Spleen (tissue), 13 donors: ENCODE measurements at regions of chr15 and their contacts with region 1.

Region 1: GRCh38 chr15:85730001-85730820 is 64.5 kb downstream of the KLHL25 start:
- DNase-seq: no peak
- H3K4me3 ChIP-seq: no peak overlapping the region
- H3K27ac ChIP-seq: peak overlapping the region in 2 of 8 donors; percentile 14 to 55
- H3K4me1 ChIP-seq: peaks cover 0 to 27% (median 6%) of the 10 kb centered on the region in 6 donors
- H3K27me3 ChIP-seq: no peaks in the 10 kb centered on the region
- CTCF ChIP-seq: peak; percentile 61 to 86 (median 79)
- POLR2A ChIP-seq: no peak

Region 2: GRCh38 chr15:85794603-85795336 is 64.6 kb after region 1 on chr15 and contains the start of gene KLHL25:
- intact Hi-C with region 1: loop called (anchors 10 kb)
- DNase-seq: peak; percentile 97
- H3K4me3 ChIP-seq: peak within 1 kb of the TSS; percentile 64 to 95 (median 88)
- H3K27ac ChIP-seq: peak within 1 kb of the TSS; percentile 22 to 89 (median 82)
- H3K4me1 ChIP-seq: peaks cover 0 to 36% (median 28%) of the 10 kb centered on the region in 6 donors
- H3K27me3 ChIP-seq: peaks cover 0 to 15% (median 0%) of the 10 kb centered on the region in 7 donors
- CTCF ChIP-seq: peak in 2 of 11 experiments; percentile 14 to 18
- POLR2A ChIP-seq: peak in 1 of 3 donors; percentile 65
- total RNA-seq, gene KLHL25: 2.7 to 4.6 (median 4.0) TPM

Region 3: GRCh38 chr15:85839643-85840042 is 109.4 kb after region 1 on chr15:
- intact Hi-C with region 1: loop called (anchors 2 kb)
- DNase-seq: no peak
- H3K4me3 ChIP-seq: no peak overlapping the region
- H3K27ac ChIP-seq: no peak overlapping the region
- H3K4me1 ChIP-seq: peaks cover 3 to 14% (median 11%) of the 10 kb centered on the region in 6 donors
- H3K27me3 ChIP-seq: peaks cover 0 to 31% (median 0%) of the 10 kb centered on the region in 7 donors
- CTCF ChIP-seq: no peak
- POLR2A ChIP-seq: no peak

Region 4: DNA sequence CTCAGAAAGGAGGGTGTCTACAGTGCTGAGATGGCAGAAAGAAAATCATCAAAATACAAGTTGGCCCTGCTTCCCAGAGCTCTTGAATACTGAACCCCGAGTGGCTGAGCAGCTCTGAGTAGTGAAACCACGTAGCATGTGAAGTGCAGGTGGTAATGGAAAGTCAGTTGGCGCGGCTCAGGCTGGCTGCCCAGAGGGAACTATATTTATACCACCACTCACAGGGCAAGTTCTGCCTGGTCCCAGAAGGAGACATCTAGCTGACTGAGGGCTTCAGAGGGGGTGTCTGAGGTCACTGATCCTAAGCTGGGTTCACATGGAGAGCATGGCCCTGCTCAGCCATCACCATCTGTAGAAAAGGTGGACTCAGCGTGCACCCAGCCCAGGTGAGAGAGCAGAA is 219.9 kb after region 1 on chr15:
- intact Hi-C with region 1: no loop called
- DNase-seq: no peak
- H3K4me3 ChIP-seq: no peak overlapping the region
- H3K27ac ChIP-seq: no peak overlapping the region
- H3K4me1 ChIP-seq: no peaks in the 10 kb centered on the region
- H3K27me3 ChIP-seq: no peaks in the 10 kb centered on the region
- CTCF ChIP-seq: no peak
- POLR2A ChIP-seq: no peak

Region 5: GRCh38 chr15:86089422-86089821 is 359.2 kb after region 1 on chr15:
- intact Hi-C with region 1: no loop called
- DNase-seq: no peak
- H3K4me3 ChIP-seq: no peak overlapping the region
- H3K27ac ChIP-seq: no peak overlapping the region
- H3K4me1 ChIP-seq: no peaks in the 10 kb centered on the region
- H3K27me3 ChIP-seq: no peaks in the 10 kb centered on the region
- CTCF ChIP-seq: no peak
- POLR2A ChIP-seq: no peak